Endothelial cell of umbilical vein (primary cell): ENCODE measurements at regions of chr3 and their contacts with region 1.

Region 1: DNA sequence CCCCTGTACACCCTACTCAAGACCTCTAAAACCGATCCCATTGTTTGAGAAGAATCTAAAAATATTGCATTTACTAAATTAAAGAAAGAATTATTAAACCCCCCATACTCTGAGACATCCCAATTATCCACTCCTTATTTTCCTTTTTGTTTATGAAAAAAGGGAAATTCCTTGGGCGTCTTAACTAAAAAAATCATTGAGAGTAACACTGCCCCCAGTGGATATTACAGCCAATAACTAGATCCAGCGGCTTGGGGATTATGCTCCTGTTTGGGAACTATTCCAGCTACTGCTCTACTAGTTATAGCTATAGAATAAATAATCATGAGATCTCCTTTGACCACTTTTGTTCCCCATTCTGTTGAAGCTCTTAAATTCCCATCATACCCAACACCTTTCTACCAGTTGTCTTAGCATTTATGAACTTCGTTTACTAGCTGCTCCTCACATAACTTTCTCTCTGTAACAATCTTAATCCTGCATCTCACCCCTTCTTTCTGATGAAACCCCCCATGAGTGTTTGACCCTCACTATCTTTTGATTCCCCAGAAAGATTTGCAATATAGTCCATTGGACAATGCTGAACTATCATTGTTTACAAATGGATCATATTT is 12.7 kb upstream of the CFAP91 start:
- DNase-seq: peak; percentile 52
- H3K4me3 ChIP-seq: no peak overlapping the region
- H3K27ac ChIP-seq: no peak overlapping the region
- H3K4me1 ChIP-seq: no peaks in the 10 kb centered on the region
- H3K27me3 ChIP-seq: no peaks in the 10 kb centered on the region
- CTCF ChIP-seq: peak; percentile 38 to 45
- POLR2A ChIP-seq: no peak

Region 2: DNA sequence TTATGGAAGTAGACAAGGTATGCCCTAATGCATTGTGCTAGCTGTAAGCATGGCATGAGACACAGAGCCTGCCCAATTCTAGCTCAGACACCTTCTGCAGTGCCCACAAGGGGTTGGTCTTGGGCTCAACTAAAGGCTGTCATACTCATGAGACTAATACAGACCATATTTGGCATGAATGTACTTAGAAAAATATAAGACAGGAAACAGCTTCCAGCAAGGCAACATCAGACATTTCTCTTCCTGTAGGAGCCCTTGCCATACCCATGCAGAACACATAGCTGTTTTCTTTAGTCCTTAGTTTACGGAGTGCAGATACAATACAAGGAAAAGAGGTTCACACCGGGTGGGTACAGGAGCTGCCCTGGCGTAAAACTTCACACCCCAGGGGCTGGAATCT is 61.3 kb after region 1 on chr3:
- CTCF ChIA-PET with region 1: interaction called, 12 read pairs
- POLR2A ChIA-PET with region 1: no interaction called
- dilution Hi-C with region 1: no loop called
- intact Hi-C with region 1: no loop called
- DNase-seq: peak; percentile 93
- H3K4me3 ChIP-seq: no peak overlapping the region
- H3K27ac ChIP-seq: peak overlapping the region; percentile 68
- H3K4me1 ChIP-seq: peaks cover 19% of the 10 kb centered on the region
- H3K27me3 ChIP-seq: no peaks in the 10 kb centered on the region
- CTCF ChIP-seq: peak in 1 of 2 donors; percentile 9
- POLR2A ChIP-seq: no peak